ENCODE measurements at regions of chr21 and their contacts with region 1.

Region 1: GRCh38 chr21:42424914-42425541 is 21.3 kb downstream of the UBASH3A start:
- DNase-seq: no peak
- ATAC-seq: peak; percentile 66
- H3K4me3 ChIP-seq: 0 out of 2 replicates have a peak overlapping the region, but pooled peaks have one; percentile 5
- H3K27ac ChIP-seq: peak overlapping the region; percentile 89
- H3K4me1 ChIP-seq: peaks cover 53% of the 10 kb centered on the region
- H3K27me3 ChIP-seq: no peaks in the 10 kb centered on the region
- CTCF ChIP-seq: no peak
- EP300 ChIP-seq: no peak
- POLR2A ChIP-seq: no peak; the same call in 1 of the 2 replicates
- RAD21 ChIP-seq: 0 out of 2 replicates have a peak, but pooled peaks have one; percentile 4

Region 2: DNA sequence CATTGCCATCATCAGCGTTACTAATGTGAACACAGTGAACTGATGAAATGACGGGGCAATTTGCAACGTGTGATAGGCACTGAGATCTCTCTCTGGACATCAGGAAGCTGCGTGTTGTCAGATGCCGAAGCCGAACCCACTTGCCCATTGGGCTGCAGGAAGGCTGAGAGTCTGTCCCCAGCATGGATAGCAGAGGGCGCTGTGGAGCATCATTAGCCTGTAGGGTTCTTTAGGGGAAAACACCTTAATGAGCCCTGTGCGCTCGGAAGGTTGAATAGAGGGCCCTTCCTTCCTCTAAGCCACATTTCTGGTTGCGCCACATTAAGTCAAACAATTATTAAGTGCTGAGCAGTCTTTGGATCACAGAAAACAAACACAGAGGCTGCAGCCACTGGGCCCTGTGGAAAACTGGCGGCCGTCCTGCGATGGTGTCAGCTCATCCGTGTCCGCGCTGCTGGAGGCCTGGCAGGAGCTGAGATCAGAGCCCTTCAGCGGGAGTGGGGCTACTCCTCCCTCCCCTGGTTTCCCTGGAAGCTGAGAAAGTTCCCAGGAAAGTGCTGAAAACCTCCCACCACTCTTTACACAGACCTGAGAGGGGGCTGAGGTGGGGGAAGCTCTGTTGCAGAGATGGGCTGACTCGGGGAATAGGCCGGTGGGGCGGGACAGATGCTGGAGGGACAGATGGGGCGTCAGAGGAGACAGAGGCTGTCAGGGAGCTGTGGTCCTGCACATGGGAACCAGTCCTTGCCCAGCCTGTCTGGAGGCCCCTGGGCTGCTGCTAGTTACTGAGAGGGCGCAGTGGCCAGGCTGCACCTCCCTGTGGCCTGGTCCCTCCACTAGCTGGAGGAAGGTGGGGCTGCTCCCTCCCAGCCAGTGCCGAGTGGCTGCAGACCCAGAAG is 86.9 kb before region 1 on chr21:
- CTCF ChIA-PET with region 1: interaction called, 9 read pairs
- POLR2A ChIA-PET with region 1: interaction called, 4 read pairs
- RAD21 ChIA-PET with region 1: interaction called, 7 read pairs
- SMC1A ChIA-PET with region 1: interaction called, 41 read pairs
- in situ Hi-C with region 1: no loop called
- intact Hi-C with region 1: no loop called
- DNase-seq: no peak
- ATAC-seq: peak; percentile 90
- H3K4me3 ChIP-seq: no peak overlapping the region
- H3K27ac ChIP-seq: no peak overlapping the region
- H3K4me1 ChIP-seq: peaks cover 13% of the 10 kb centered on the region
- H3K27me3 ChIP-seq: no peaks in the 10 kb centered on the region
- CTCF ChIP-seq: peak; percentile 50 to 62 (median 53)
- EP300 ChIP-seq: no peak
- POLR2A ChIP-seq: no peak
- RAD21 ChIP-seq: peak; percentile 81

Region 3: GRCh38 chr21:42392721-42393442 is 32.1 kb before region 1 on chr21:
- CTCF ChIA-PET with region 1: interaction called, 17 read pairs
- POLR2A ChIA-PET with region 1: interaction called, 27 read pairs
- RAD21 ChIA-PET with region 1: interaction called, 54 read pairs
- SMC1A ChIA-PET with region 1: interaction called, 124 read pairs
- in situ Hi-C with region 1: no loop called
- intact Hi-C with region 1: loop called (anchors 2 kb)
- DNase-seq: peak; percentile 96
- ATAC-seq: peak; percentile 91
- H3K4me3 ChIP-seq: peak overlapping the region; percentile 33; the same call in 1 of the 2 replicates
- H3K27ac ChIP-seq: peak overlapping the region; percentile 91
- H3K4me1 ChIP-seq: peaks cover 53% of the 10 kb centered on the region
- H3K27me3 ChIP-seq: no peaks in the 10 kb centered on the region
- CTCF ChIP-seq: no peak
- EP300 ChIP-seq: peak in 1 of 2 experiments; percentile 13; a peak in 1 of 4 replicates
- POLR2A ChIP-seq: no peak
- RAD21 ChIP-seq: peak; percentile 34

Region 4: DNA sequence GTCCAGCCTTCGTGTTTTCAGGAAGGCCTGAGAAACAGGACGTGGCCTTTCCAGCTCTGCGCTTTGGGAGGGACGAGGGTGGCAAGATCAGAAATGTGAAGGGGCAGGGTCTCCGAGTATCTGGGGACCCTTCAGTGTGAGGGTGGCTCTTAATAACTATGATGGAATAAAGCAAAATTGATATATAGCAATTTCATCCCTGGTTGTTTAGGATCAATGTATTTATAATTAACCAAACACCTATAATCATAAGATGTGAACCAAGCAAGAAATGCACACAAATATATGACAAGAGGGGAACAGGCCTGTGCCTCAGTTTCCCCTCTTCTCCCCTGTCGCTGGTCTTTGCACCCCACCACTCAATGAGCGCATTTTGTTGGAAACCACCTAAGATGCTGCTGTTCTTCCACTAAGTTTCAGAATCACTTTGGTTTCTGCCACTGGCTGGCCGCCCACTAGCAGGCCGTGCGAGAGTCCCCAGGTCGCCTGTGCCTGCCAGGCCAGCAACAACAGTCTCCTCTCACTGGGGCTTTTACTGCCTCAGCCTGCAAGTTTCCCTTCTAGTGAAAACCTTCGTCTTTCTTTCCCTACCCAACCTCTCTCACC is 15.3 kb after region 1 on chr21:
- CTCF ChIA-PET with region 1: interaction called, 9 read pairs
- POLR2A ChIA-PET with region 1: interaction called, 15 read pairs
- RAD21 ChIA-PET with region 1: interaction called, 81 read pairs
- SMC1A ChIA-PET with region 1: interaction called, 68 read pairs
- in situ Hi-C with region 1: no loop called
- intact Hi-C with region 1: loop called (anchors 1 kb)
- DNase-seq: peak; percentile 70
- ATAC-seq: peak; percentile 96
- H3K4me3 ChIP-seq: no peak overlapping the region
- H3K27ac ChIP-seq: peak overlapping the region; percentile 59
- H3K4me1 ChIP-seq: peaks cover 18% of the 10 kb centered on the region
- H3K27me3 ChIP-seq: no peaks in the 10 kb centered on the region
- CTCF ChIP-seq: no peak
- EP300 ChIP-seq: peak; percentile 56 to 81; a peak in 3 of 4 replicates
- POLR2A ChIP-seq: no peak
- RAD21 ChIP-seq: peak; percentile 31; the same call in 1 of the 2 replicates

Region 5: DNA sequence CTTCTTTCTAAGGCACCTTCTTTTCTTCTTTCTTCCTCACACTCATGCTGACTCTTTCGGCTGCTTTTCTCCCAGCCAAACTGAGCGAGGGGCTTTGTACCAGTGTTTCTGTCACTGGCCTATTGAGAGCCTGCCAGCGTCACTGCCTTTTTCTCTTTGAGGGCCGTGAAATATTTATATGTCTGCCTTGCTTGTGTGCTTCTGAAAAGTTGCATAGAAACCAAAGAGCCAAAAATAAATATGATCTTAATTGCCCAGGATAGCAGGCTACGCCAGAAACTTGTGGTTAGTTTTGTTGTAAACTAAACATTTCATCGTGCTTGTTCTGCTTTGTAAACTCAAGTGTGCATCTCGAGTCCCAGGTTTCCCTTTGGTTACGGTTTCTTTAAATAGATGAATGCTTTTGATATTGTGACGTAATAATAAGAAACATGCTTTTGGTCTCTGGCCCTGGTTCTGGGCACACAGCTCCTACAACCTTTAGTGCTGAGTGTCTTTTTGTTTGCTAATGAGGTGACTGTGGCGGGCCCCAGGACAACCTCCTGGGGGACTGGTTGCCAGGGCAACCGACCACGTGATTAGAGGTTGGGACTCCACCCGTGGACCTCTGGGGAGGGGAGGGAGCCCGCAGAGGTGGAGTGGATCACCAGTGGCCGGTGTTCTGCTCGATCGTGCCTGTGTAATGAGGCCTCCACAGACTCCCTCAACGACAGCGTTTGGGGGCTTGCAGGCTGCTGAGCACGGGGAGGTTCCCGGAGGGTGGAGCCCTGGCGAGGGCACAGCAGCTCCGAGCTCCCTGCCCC is 99.5 kb after region 1 on chr21:
- CTCF ChIA-PET with region 1: interaction called, 5 read pairs
- POLR2A ChIA-PET with region 1: interaction called, 10 read pairs
- RAD21 ChIA-PET with region 1: interaction called, 5 read pairs
- SMC1A ChIA-PET with region 1: interaction called, 3 read pairs
- in situ Hi-C with region 1: no loop called
- intact Hi-C with region 1: no loop called
- DNase-seq: peak; percentile 86
- ATAC-seq: peak; percentile 82
- H3K4me3 ChIP-seq: peak overlapping the region; percentile 48
- H3K27ac ChIP-seq: peak overlapping the region; percentile 85
- H3K4me1 ChIP-seq: peaks cover 57% of the 10 kb centered on the region
- H3K27me3 ChIP-seq: no peaks in the 10 kb centered on the region
- CTCF ChIP-seq: no peak
- EP300 ChIP-seq: peak; percentile 80 to 81
- POLR2A ChIP-seq: peak; percentile 38; the same call in 1 of the 2 replicates
- RAD21 ChIP-seq: no peak